ENCODE measurements at regions of chr20 and their contacts with region 1.

Region 1: GRCh38 chr20:35146920-35147574 is at the start of gene EDEM2:
- DNase-seq: peak; percentile 93
- H3K4me3 Mint-ChIP-seq: peak within 1 kb of the TSS; percentile 96
- H3K27ac Mint-ChIP-seq: peak within 1 kb of the TSS; percentile 91
- H3K4me1 Mint-ChIP-seq: peaks cover 28% of the 10 kb centered on the region
- H3K27me3 Mint-ChIP-seq: peaks cover 3% of the 10 kb centered on the region
- total RNA-seq, gene EDEM2: 25.5 and 25.7 TPM in 2 replicates

Region 2: DNA sequence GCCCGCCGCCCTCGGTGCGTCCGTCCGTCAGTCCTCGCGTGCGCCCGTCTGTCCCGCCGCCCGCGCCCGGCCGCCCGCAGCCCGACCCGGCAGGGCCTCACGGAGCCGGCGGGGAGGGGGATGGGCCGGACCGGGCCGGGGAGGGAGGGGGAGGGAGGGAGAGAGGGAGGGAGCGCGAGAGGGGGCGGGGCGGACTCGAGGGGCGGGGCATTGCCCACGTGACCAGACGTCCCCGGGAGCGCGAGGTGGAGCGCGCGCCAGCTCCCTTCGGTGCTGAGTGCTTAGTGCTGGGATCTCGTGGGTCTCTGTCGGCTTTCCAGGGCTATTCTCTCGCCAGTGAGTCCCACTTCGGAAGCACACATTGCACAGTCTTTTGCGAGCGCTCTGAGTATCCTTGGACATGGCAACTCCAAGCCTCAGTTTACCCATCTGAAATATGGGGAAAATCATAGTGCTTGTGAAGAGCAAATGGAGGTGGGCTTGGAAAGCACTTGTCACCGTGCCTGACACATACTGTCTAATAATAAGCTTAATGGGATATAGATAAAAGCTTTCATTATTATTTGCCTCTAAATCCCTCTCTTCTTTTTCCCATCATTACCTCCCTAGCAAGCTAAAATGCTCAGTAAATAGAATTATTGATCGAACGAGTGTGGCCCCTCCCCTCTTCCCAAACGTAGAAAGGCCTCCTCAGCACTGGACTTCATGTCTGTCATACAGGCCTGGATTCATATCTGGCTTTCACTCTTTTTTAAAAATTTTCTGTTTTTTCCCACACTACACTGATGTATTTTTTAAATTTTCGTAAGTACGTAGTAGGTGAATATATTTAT is 321.3 kb before region 1 on chr20 and contains the start of gene NCOA6:
- intact Hi-C with region 1: loop called (anchors 5 kb)
- DNase-seq: peak; percentile 72
- H3K4me3 Mint-ChIP-seq: peak within 1 kb of the TSS; percentile 98
- H3K27ac Mint-ChIP-seq: peak within 1 kb of the TSS; percentile 94
- H3K4me1 Mint-ChIP-seq: peaks cover 29% of the 10 kb centered on the region
- H3K27me3 Mint-ChIP-seq: peaks cover 11% of the 10 kb centered on the region
- total RNA-seq, gene NCOA6: 29.1 and 30.9 TPM in 2 replicates

Region 3: DNA sequence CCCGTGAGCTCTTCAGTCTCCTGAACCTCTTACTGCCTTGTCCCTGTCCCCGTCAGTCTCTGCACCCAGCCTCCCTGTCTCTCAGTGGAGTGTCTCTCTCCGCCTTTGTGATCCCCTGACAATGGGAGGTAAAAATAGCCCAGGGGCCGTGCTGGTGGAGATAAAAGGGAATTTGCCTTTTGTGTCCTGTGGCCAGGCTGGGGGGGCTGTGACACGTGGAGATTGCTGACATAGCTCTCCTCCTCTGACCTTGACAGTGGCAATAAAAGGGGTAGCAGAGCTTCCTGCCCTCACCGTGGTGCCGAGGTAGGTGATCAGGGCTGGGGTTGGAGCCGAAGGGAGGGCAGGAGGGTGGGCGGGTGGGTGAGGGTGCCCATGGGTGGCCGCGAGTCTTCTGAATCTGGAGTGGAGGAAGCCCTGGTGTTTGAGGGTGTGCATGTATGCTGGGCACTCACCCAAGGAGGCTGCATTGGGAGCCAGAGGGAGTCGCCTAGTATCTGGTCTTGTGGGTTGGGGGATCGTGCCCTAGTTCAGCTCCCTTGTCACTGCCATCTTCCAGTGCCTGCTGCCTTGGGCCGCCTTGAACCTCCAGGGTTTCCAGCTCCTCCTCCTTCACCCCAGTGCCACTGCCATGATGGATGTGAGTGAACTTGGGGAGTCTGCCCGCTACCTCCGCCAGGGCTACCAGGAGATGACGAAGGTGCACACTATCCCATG is 169.5 kb before region 1 on chr20:
- intact Hi-C with region 1: no loop called
- DNase-seq: no peak
- H3K4me3 Mint-ChIP-seq: no peak overlapping the region
- H3K27ac Mint-ChIP-seq: no peak overlapping the region
- H3K4me1 Mint-ChIP-seq: no peaks in the 10 kb centered on the region
- H3K27me3 Mint-ChIP-seq: peaks cover 11% of the 10 kb centered on the region

Region 4: GRCh38 chr20:35207950-35208611 is 61.0 kb after region 1 on chr20:
- intact Hi-C with region 1: loop called (anchors 1 kb)
- DNase-seq: peak; percentile 63
- H3K4me3 Mint-ChIP-seq: no peak overlapping the region
- H3K27ac Mint-ChIP-seq: no peak overlapping the region
- H3K4me1 Mint-ChIP-seq: no peaks in the 10 kb centered on the region
- H3K27me3 Mint-ChIP-seq: no peaks in the 10 kb centered on the region

Region 5: DNA sequence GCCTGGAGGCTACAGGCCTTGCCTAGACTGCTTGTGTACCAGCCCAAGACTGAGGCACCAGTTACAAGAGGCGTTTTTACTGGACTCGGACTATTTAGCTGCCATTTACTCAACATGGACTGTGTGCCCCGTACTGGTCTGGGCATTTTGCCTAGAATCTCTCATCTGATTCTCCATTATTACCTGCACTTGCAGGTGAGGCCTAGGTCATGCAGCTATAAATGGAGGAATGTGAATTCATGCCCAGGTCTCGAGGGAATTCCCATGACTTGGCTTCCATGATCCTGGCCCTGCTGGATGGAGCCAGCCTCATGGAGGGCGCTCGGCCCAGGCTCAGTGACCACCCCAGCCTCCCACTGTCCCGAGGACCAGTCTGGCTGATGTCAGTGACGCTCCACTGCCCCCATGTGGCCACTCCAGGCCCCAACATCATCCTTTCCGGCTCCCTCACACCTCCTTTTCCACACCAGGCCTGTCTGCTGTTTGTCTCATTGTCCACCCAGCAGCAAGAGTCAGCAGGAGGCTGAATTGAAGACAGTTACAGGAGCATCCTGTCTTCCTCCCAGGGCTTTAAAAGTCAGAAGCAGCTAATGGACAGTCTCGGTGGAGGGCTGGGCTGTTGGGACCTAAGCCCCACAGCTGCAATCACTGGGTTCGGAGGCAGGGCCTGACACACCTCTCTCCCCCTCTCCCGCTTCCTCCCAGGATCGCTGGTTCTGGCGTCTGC is 122.2 kb after region 1 on chr20:
- intact Hi-C with region 1: loop called (anchors 1 kb)
- DNase-seq: no peak
- H3K4me3 Mint-ChIP-seq: no peak overlapping the region
- H3K27ac Mint-ChIP-seq: no peak overlapping the region
- H3K4me1 Mint-ChIP-seq: no peaks in the 10 kb centered on the region
- H3K27me3 Mint-ChIP-seq: no peaks in the 10 kb centered on the region

Region 6: DNA sequence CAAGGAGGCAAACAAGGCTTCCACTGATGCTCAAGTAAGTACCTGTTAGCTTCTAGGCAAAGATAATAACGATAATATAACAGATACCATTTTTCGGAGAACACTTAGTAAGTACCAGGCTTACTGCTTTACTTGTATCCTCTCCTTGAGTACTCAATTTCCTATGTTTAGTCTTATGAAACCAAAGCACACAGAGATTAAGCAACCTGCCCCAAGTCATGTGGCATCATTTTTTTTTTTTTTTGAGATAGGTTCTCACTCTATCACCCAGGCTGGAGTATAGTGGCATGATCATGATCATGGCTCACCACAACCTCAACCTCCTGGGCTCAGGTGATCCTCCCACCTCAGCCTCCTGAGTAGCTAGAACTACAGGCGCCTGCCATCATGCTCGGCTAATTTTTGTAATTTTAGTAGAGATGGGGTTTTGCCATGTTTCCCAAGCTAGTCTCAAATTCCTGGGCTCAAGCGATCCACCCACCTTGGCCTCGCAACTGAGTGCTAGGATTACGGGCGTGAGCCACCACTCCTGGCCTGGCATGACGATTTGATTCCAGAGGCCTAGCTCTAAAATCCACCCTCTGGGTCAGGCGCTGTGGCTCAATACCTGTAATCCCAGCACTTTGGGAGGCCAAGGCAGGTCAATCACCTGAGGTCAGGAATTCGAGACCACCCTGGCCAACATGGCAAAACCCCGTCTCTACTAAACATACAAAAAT is 482.5 kb after region 1 on chr20:
- intact Hi-C with region 1: no loop called
- DNase-seq: no peak
- H3K4me3 Mint-ChIP-seq: no peak overlapping the region
- H3K27ac Mint-ChIP-seq: no peak overlapping the region
- H3K4me1 Mint-ChIP-seq: no peaks in the 10 kb centered on the region
- H3K27me3 Mint-ChIP-seq: no peaks in the 10 kb centered on the region

Measured in activated T-helper 2 cell treated with anti-CD3 and anti-CD28 coated beads, Interferon-gamma antibody, Interleukin-2, Interleukin-4, amounts not matched to agents 10 μg/mL and 5 μg/mL and 100 μg/mL, durations not matched to agents 14 hours and 24 hours and 36 hours (primary cell).